HCT116 (cell line): ENCODE measurements at regions of chr6 and their contacts with region 1.

Region 1: GRCh38 chr6:26156076-26156849 is 69.0 kb downstream of the HFE start:
- DNase-seq: peak; percentile 73
- ATAC-seq: peak; percentile 60
- H3K4me3 ChIP-seq: peak overlapping the region; percentile 69 to 75
- H3K27ac ChIP-seq: peak overlapping the region; percentile 88
- H3K4me1 ChIP-seq: peaks cover 20 to 71% of the 10 kb centered on the region in 2 experiments
- H3K27me3 ChIP-seq: no peaks in the 10 kb centered on the region
- CTCF ChIP-seq: no peak
- POLR2A ChIP-seq: peak; percentile 98
- RAD21 ChIP-seq: peak; percentile 16; the same call in 1 of the 2 replicates

Region 2: GRCh38 chr6:26031595-26032339 is 124.5 kb before region 1 on chr6:
- CTCF ChIA-PET with region 1: no interaction called
- POLR2A ChIA-PET with region 1: interaction called, 105 read pairs
- RAD21 ChIA-PET with region 1: no interaction called
- intact Hi-C with region 1: no loop called
- DNase-seq: peak; percentile 99
- ATAC-seq: peak; percentile 66
- H3K4me3 ChIP-seq: peak overlapping the region; percentile 70 to 74
- H3K27ac ChIP-seq: peak overlapping the region; percentile 98
- H3K4me1 ChIP-seq: peaks cover 51 to 87% of the 10 kb centered on the region in 2 experiments
- H3K27me3 ChIP-seq: no peaks in the 10 kb centered on the region
- CTCF ChIP-seq: no peak
- POLR2A ChIP-seq: peak; percentile 99
- RAD21 ChIP-seq: peak; percentile 5; the same call in 1 of the 2 replicates

Region 3: GRCh38 chr6:26103770-26104456 is 52.4 kb before region 1 on chr6:
- CTCF ChIA-PET with region 1: no interaction called
- POLR2A ChIA-PET with region 1: interaction called, 32 read pairs
- RAD21 ChIA-PET with region 1: no interaction called
- intact Hi-C with region 1: no loop called
- DNase-seq: peak; percentile 95
- ATAC-seq: peak; percentile 74
- H3K4me3 ChIP-seq: peak overlapping the region; percentile 48 to 59
- H3K27ac ChIP-seq: peak overlapping the region; percentile 94
- H3K4me1 ChIP-seq: peaks cover 17 to 39% of the 10 kb centered on the region in 2 experiments
- H3K27me3 ChIP-seq: no peaks in the 10 kb centered on the region
- CTCF ChIP-seq: peak in 2 of 3 experiments; percentile 35 to 40; a peak in 2 of 6 replicates
- POLR2A ChIP-seq: peak; percentile 99
- RAD21 ChIP-seq: peak; percentile 42

Region 4: GRCh38 chr6:26136321-26136720 is 19.9 kb before region 1 on chr6:
- CTCF ChIA-PET with region 1: no interaction called
- POLR2A ChIA-PET with region 1: interaction called, 22 read pairs
- RAD21 ChIA-PET with region 1: no interaction called
- intact Hi-C with region 1: no loop called
- DNase-seq: no peak
- ATAC-seq: no peak
- H3K4me3 ChIP-seq: no peak overlapping the region
- H3K27ac ChIP-seq: no peak overlapping the region
- H3K4me1 ChIP-seq: 0 out of 4 replicates have a peak, but pooled peaks cover 0 to under 1% of the 10 kb centered on the region in 2 experiments
- H3K27me3 ChIP-seq: no peaks in the 10 kb centered on the region
- CTCF ChIP-seq: no peak
- POLR2A ChIP-seq: no peak
- RAD21 ChIP-seq: no peak

Region 5: DNA sequence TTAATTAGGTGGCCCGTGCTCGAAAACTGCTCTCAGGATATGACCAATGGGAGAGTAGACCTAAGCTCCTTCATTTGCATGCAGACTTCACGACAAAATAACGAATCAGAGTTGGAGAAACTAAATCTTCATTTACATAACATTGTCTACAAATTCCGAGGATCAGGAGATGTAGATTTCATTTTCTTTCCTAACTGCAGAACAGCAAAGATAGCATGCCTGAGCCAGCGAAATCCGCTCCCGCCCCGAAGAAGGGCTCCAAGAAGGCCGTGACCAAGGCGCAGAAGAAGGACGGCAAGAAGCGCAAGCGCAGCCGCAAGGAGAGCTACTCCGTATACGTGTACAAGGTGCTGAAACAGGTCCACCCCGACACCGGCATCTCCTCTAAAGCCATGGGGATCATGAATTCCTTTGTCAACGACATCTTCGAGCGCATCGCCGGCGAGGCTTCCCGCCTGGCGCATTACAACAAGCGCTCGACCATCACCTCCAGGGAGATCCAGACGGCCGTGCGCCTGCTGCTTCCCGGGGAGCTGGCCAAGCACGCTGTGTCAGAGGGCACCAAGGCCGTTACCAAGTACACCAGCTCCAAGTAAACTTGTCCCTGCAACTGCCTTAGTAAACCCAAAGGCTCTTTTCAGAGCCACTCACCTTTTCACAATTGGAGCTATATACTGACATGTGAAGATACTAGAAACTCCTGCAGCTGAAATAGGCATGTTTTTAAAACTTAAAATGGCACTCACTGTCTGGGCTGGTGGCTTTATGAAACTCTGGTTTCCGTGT is 27.5 kb after region 1 on chr6:
- CTCF ChIA-PET with region 1: no interaction called
- POLR2A ChIA-PET with region 1: interaction called, 94 read pairs
- RAD21 ChIA-PET with region 1: no interaction called
- intact Hi-C with region 1: no loop called
- DNase-seq: no peak
- ATAC-seq: no peak
- H3K4me3 ChIP-seq: no peak overlapping the region
- H3K27ac ChIP-seq: no peak overlapping the region
- H3K4me1 ChIP-seq: peaks cover 3 to 14% of the 10 kb centered on the region in 2 experiments; a peak in 3 of 4 replicates
- H3K27me3 ChIP-seq: no peaks in the 10 kb centered on the region
- CTCF ChIP-seq: no peak
- POLR2A ChIP-seq: no peak
- RAD21 ChIP-seq: no peak

Region 6: DNA sequence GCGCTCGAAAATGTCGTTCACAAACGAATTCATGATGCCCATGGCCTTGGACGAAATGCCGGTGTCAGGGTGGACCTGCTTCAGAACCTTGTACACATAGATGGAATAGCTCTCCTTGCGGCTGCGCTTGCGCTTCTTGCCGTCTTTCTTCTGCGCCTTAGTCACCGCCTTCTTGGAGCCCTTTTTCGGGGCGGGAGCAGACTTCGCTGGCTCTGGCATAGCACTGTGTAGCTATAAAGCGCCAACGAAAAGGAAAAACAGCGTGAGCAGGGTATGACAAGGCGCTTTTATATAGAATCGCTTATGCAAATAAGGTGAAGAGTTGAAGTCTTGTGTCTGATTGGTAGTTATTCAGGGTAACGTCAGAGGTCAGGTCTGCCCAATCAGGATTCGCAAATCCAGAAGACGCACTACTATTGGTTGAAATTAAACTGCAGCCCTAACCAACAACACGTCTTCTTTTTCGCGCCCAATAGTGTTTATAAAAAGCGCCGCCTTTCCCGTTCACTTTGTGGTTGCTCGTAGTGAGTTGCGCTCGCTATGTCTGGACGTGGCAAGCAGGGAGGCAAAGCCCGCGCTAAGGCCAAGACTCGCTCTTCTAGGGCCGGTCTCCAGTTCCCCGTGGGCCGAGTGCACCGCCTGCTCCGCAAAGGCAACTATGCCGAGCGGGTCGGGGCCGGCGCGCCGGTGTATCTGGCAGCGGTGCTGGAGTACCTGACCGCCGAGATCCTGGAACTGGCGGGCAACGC is 976.4 kb after region 1 on chr6:
- CTCF ChIA-PET with region 1: no interaction called
- POLR2A ChIA-PET with region 1: interaction called, 26 read pairs
- RAD21 ChIA-PET with region 1: no interaction called
- intact Hi-C with region 1: no loop called
- DNase-seq: peak; percentile 100
- ATAC-seq: peak; percentile 75
- H3K4me3 ChIP-seq: peak overlapping the region; percentile 62 to 71
- H3K27ac ChIP-seq: peak overlapping the region; percentile 99
- H3K4me1 ChIP-seq: peaks cover 21 to 38% of the 10 kb centered on the region in 2 experiments
- H3K27me3 ChIP-seq: no peaks in the 10 kb centered on the region
- CTCF ChIP-seq: no peak
- POLR2A ChIP-seq: peak; percentile 98
- RAD21 ChIP-seq: no peak